KBM-7 (cell line): ENCODE measurements at regions of chr12 and their contacts with region 1.

Region 1: GRCh38 chr12:10354502-10354901 is 35.3 kb downstream of the KLRK1 start:
- DNase-seq: no peak

Region 2: GRCh38 chr12:9198012-9198411 is 1156.5 kb before region 1 on chr12:
- in situ Hi-C with region 1: no loop called
- DNase-seq: peak; percentile 34

Region 3: GRCh38 chr12:10140001-10140400 is 214.5 kb before region 1 on chr12:
- in situ Hi-C with region 1: no loop called
- DNase-seq: peak; percentile 79

Region 4: GRCh38 chr12:10409387-10409786 is 54.9 kb after region 1 on chr12 and contains the start of gene KLRC4:
- in situ Hi-C with region 1: loop called (anchors 10 kb)
- DNase-seq: peak; percentile 79